Activated CD8-positive, alpha-beta T cell treated with anti-CD3 and anti-CD28 coated beads, Interleukin-2, amount 10 ng/mL, durations not matched to agents 7 days and 5 days (primary cell): ENCODE measurements at regions of chr17 and their contacts with region 1.

Region 1: GRCh38 chr17:56977673-56978395 is at the start of gene SCPEP1:
- DNase-seq: peak; percentile 83
- ATAC-seq: peak; percentile 96
- H3K4me3 Mint-ChIP-seq: peak within 1 kb of the TSS; percentile 89
- H3K27ac Mint-ChIP-seq: peak within 1 kb of the TSS; percentile 89
- H3K4me1 Mint-ChIP-seq: peaks cover 24% of the 10 kb centered on the region
- H3K27me3 Mint-ChIP-seq: peaks cover 23% of the 10 kb centered on the region
- total RNA-seq, gene SCPEP1: 13.4 to 13.7 TPM

Region 2: GRCh38 chr17:56960596-56961538 is 17.0 kb before region 1 on chr17 and contains the start of gene COIL:
- CTCF ChIA-PET with region 1: interaction called, 15 read pairs
- POLR2A ChIA-PET with region 1: interaction called, 3 read pairs
- DNase-seq: peak; percentile 95
- ATAC-seq: peak; percentile 100
- H3K4me3 Mint-ChIP-seq: peak within 1 kb of the TSS; percentile 83
- H3K27ac Mint-ChIP-seq: peak within 1 kb of the TSS; percentile 87
- H3K4me1 Mint-ChIP-seq: peaks cover 23% of the 10 kb centered on the region
- H3K27me3 Mint-ChIP-seq: no peaks in the 10 kb centered on the region
- total RNA-seq, gene COIL: 17.6 to 17.8 TPM

Region 3: DNA sequence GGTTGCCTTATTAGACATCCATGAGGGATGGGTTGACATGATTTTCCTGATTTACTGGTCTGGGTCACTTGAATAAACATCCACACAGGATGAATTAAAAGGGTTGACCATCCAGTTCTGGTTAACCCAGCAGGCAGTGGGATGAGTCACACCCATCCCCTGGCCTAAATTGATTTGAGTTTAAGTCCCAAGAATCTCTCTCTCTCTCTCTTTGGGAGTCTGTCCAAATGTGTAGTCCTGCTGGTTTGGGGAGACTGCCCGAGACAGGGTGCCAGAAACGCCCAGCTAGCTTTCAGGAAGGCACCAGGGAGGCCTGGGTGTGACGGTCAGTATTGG is 38.9 kb after region 1 on chr17:
- CTCF ChIA-PET with region 1: no interaction called
- POLR2A ChIA-PET with region 1: no interaction called
- DNase-seq: no peak
- ATAC-seq: no peak
- H3K4me3 Mint-ChIP-seq: no peak overlapping the region
- H3K27ac Mint-ChIP-seq: no peak overlapping the region
- H3K4me1 Mint-ChIP-seq: no peaks in the 10 kb centered on the region
- H3K27me3 Mint-ChIP-seq: peaks cover 22% of the 10 kb centered on the region

Region 4: DNA sequence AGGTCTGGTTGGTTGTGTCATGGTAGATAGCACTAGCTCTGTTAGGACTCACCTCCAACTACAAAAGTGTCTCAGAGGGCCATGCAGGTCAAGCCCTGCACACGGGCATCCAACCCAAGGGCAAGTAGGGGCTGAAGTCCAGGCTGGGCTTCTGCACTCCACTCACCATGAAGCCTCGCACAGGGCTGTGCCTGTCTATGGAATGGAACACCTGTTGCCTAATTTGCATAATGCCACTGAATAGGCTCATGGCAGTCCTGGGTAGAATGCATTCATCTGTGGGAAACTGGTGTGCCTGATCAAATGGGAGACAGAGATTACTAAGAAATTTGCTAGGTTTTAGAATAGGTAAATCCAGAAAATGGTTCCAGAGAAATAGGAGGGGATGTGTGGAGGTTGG is 99.2 kb after region 1 on chr17:
- CTCF ChIA-PET with region 1: no interaction called
- POLR2A ChIA-PET with region 1: no interaction called
- DNase-seq: no peak
- ATAC-seq: no peak
- H3K4me3 Mint-ChIP-seq: no peak overlapping the region
- H3K27ac Mint-ChIP-seq: no peak overlapping the region
- H3K4me1 Mint-ChIP-seq: no peaks in the 10 kb centered on the region
- H3K27me3 Mint-ChIP-seq: peaks cover 25% of the 10 kb centered on the region